Activated CD8-positive, alpha-beta memory T cell treated with anti-CD3 and anti-CD28 coated beads, Interleukin-2, amount 10 ng/mL, durations not matched to agents 7 days and 5 days (primary cell): ENCODE measurements at regions of chr12 and their contacts with region 1.

Region 1: GRCh38 chr12:110431957-110432587 is 18.1 kb downstream of the ARPC3 start:
- DNase-seq: peak; percentile 55
- ATAC-seq: no peak
- H3K4me3 Mint-ChIP-seq: no peak overlapping the region
- H3K27ac Mint-ChIP-seq: no peak overlapping the region
- H3K4me1 Mint-ChIP-seq: peaks cover 10% of the 10 kb centered on the region
- H3K27me3 Mint-ChIP-seq: no peaks in the 10 kb centered on the region

Region 2: DNA sequence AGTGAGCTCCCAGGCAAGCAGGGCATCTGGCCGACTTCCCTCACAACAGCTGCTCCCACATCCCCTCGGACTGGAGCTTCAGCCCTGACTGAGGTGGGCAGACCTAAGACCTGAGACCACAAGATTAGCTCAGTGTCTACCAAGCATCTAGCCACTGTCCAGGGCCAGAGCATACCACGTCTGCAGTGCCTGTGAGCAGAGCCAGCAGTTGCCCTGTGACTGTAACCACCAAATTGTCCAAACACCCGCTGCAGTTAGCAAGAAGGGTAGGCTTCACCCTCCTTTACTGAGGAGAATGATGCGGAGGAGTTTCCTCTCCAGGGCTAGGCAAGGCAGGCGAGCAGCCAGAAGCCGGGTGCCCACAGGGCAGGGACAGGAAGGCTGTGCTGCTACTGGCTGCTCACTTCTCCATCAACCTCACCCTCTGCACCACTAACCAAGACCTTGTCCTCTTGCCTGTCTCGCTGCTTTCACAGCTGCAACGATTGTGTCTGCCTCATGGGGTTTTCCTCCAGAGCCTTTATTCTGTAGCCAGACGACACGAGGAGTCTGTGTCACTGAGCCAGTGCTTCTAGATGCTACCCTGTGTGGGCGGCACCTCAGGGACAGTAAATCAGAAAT is 82.4 kb before region 1 on chr12:
- CTCF ChIA-PET with region 1: interaction called, 19 read pairs
- DNase-seq: peak; percentile 49
- ATAC-seq: peak; percentile 59
- H3K4me3 Mint-ChIP-seq: no peak overlapping the region
- H3K27ac Mint-ChIP-seq: peak overlapping the region; percentile 77
- H3K4me1 Mint-ChIP-seq: peaks cover 33% of the 10 kb centered on the region
- H3K27me3 Mint-ChIP-seq: no peaks in the 10 kb centered on the region

Region 3: GRCh38 chr12:110382683-110383082 is 49.4 kb before region 1 on chr12:
- CTCF ChIA-PET with region 1: interaction called, 11 read pairs
- DNase-seq: no peak
- ATAC-seq: peak; percentile 25
- H3K4me3 Mint-ChIP-seq: no peak overlapping the region
- H3K27ac Mint-ChIP-seq: no peak overlapping the region
- H3K4me1 Mint-ChIP-seq: peaks cover 23% of the 10 kb centered on the region
- H3K27me3 Mint-ChIP-seq: no peaks in the 10 kb centered on the region

Region 4: GRCh38 chr12:110421159-110421661 is 10.9 kb before region 1 on chr12:
- CTCF ChIA-PET with region 1: interaction called, 17 read pairs
- DNase-seq: no peak
- ATAC-seq: no peak
- H3K4me3 Mint-ChIP-seq: no peak overlapping the region
- H3K27ac Mint-ChIP-seq: no peak overlapping the region
- H3K4me1 Mint-ChIP-seq: no peaks in the 10 kb centered on the region
- H3K27me3 Mint-ChIP-seq: peaks cover 28% of the 10 kb centered on the region

Region 5: DNA sequence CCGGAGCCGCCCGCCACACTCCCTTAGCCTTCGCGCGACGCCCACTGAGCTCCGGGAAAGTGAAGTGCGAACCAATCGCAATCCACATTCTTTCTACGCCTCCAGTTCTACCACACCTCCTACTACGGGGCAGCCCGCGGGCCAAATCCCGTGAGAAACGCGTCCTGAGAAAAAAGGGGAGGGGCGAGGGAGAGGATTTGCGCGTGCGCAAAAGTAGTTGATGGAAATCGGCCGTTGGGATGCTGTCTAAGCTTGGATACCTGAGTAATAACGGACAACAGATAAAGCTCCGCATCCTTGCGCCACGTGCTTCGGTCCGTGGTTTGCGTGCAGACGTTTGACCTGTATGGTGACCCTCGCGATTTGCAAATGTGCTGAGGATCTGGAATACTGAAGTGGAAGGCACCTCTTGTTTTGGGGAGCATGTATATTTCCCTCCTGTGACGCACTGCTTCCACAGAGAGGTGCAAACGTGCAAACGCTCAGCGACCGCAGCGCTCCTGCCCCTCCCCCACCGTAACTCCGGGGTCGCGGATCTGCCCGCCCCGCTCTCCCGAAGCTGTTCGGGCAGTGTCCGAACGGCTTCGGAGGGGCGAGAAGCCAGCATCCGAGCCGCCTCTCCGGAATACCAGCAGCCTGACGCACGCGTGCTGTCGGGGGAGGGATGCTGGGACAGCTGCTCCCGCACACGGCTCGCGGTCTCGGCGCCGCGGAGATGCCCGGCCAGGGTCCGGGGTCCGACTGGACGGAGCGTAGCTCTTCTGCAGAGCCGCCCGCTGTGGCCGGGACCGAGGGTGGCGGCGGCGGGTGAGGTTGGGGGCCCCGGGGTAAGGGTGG is 36.4 kb after region 1 on chr12 and contains the starts of genes FAM216A and GPN3:
- CTCF ChIA-PET with region 1: interaction called, 27 read pairs
- DNase-seq: peak; percentile 98
- ATAC-seq: peak; percentile 88
- H3K4me3 Mint-ChIP-seq: peak within 1 kb of the TSS; percentile 92
- H3K27ac Mint-ChIP-seq: peak within 1 kb of the TSS; percentile 98
- H3K4me1 Mint-ChIP-seq: peaks cover 43% of the 10 kb centered on the region
- H3K27me3 Mint-ChIP-seq: no peaks in the 10 kb centered on the region
- total RNA-seq, gene FAM216A: 23.1 to 24.8 TPM
- total RNA-seq, gene GPN3: 25.8 to 34.6 TPM

Region 6: DNA sequence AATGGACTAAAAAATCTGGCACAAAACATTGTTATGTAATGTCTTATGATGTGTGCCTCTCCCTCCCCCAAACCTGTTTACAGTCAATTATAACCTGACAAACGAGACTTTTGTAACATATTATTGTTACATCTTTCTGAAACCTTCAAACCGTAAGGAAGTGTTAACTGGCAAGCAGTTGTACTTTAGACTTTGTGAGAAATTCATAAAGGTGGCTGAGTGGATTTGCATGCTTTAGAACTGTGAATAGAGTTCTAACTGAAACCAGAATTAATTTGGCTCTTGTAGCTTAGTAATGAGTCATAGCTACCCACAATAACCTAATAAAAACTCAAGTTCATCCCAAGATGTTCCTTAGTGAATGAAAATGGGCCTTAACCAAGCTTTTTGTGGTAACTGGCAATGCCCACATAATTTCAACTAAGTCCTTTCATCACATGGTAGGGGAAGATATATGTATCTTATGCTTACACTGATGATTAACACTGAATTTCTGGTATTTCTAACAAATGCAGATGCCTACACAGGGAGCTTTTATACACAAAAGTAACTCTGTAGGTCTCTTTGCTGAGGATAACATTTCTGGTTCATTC is 99.8 kb after region 1 on chr12:
- CTCF ChIA-PET with region 1: no interaction called
- DNase-seq: no peak
- ATAC-seq: peak; percentile 47
- H3K4me3 Mint-ChIP-seq: no peak overlapping the region
- H3K27ac Mint-ChIP-seq: peak overlapping the region; percentile 35
- H3K4me1 Mint-ChIP-seq: peaks cover 19% of the 10 kb centered on the region
- H3K27me3 Mint-ChIP-seq: no peaks in the 10 kb centered on the region